ENCODE measurements at regions of chr18 and their contacts with region 1.

Region 1: DNA sequence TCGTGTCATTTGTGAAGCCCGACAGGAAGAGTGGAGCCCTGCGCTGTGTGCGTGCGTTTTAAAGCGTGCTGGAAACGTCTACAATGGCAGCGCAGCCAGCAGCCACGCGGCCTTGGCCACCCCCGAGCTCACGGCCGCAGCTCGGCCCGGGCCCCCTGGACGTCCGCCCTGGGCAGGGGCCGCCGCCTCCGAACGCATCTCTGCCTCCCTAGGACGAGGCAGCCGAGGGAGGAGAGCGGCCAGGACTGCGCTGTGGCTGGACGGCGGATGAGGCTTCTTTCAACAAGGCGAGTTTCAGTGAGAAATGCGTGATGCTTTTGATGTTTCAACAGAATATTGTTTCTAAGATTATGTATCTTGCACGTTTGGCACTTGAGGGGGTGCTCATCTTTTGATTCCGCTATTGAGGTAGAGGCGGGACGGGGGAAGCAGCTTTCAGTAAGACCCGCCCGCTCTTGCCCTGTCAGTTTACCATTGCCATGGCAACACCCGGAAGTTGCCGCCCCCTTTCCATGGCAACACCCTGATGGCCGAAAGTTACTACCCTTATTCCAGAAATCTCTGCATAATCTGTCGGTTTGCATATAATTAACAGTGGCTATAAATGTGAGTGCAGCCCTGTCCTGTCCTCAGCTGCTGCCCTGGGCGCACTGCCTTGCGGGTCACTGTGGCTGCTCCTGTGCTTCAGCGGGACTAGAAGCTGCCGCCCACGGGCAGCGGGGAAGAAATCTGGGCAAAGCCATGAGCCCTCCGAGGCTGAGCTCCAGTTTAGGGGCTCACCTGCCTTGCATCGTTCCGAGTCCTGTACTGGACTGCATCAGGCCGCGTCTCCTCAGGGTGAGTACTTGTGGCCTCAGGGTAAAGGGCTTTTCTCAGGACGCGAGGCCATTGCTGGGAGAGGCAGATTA is 38.6 kb downstream of the ADNP2 start:
- DNase-seq: peak in 1 of 2 experiments; percentile 84
- H3K4me3 ChIP-seq: peak overlapping the region; percentile 37 to 61 (median 48)
- H3K27ac ChIP-seq: no peak overlapping the region
- H3K4me1 ChIP-seq: no peaks in the 10 kb centered on the region; a peak in 2 of 7 replicates
- H3K27me3 ChIP-seq: no peaks in the 10 kb centered on the region
- CTCF ChIP-seq: no peak
- EP300 ChIP-seq: no peak
- POLR2A ChIP-seq: no peak
- RAD21 ChIP-seq: no peak

Region 2: DNA sequence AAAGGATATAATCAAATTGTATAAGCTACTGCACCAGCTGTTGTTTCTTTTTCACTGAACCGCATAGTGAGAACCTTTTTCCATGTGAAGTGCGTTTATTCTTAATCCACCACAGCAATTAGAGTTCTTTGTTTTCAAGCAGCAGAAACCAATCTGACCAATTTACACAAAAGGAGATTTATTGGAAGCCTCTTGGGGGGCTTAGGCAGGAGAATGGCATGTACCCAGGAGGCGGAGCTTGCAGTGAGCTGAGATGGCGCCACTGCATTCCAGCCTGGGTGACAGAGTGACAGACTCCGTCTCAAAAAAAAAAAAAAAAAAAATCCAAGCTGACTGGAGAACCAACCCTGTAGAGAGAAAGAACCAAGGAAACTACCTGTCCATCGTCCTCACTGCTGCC is 28.6 kb before region 1 on chr18:
- CTCF ChIA-PET with region 1: no interaction called
- POLR2A ChIA-PET with region 1: no interaction called
- DNase-seq: no peak
- H3K4me3 ChIP-seq: peak overlapping the region in 1 of 4 experiments; percentile 26; a peak in 2 of 8 replicates
- H3K27ac ChIP-seq: no peak overlapping the region
- H3K4me1 ChIP-seq: peaks cover 0 to 15% (median 8%) of the 10 kb centered on the region in 4 experiments; a peak in 5 of 7 replicates
- H3K27me3 ChIP-seq: no peaks in the 10 kb centered on the region
- CTCF ChIP-seq: no peak
- EP300 ChIP-seq: 0 out of 3 replicates have a peak, but pooled peaks of 1 of the 2 experiments have one; percentile 12
- POLR2A ChIP-seq: no peak
- RAD21 ChIP-seq: no peak

Region 3: GRCh38 chr18:80136679-80137078 is 11.0 kb before region 1 on chr18:
- CTCF ChIA-PET with region 1: interaction called, 39 read pairs
- POLR2A ChIA-PET with region 1: interaction called, 8 read pairs
- DNase-seq: no peak
- H3K4me3 ChIP-seq: no peak overlapping the region
- H3K27ac ChIP-seq: no peak overlapping the region
- H3K4me1 ChIP-seq: 0 out of 7 replicates have a peak, but pooled peaks cover 0 to 5% (median 0%) of the 10 kb centered on the region in 4 experiments
- H3K27me3 ChIP-seq: no peaks in the 10 kb centered on the region
- CTCF ChIP-seq: no peak
- EP300 ChIP-seq: no peak
- POLR2A ChIP-seq: no peak
- RAD21 ChIP-seq: no peak